ENCODE measurements at regions of chr12 and their contacts with region 1.

Region 1: GRCh38 chr12:2004113-2004929 is at the start of gene DCP1B:
- DNase-seq: peak; percentile 76 to 93 (median 90)
- ATAC-seq: peak; percentile 99
- H3K4me3 ChIP-seq: peak within 1 kb of the TSS; percentile 80
- H3K4me3 Mint-ChIP-seq: peak within 1 kb of the TSS; percentile 92 to 100 (median 97)
- H3K27ac ChIP-seq: peak within 1 kb of the TSS; percentile 80
- H3K27ac Mint-ChIP-seq: peak within 1 kb of the TSS; percentile 93 to 99 (median 97)
- H3K4me1 ChIP-seq: peaks cover 10 to 18% of the 10 kb centered on the region in 2 donors
- H3K4me1 Mint-ChIP-seq: peaks cover 15 to 44% (median 36%) of the 10 kb centered on the region in 7 donors
- H3K27me3 ChIP-seq: no peaks in the 10 kb centered on the region
- H3K27me3 Mint-ChIP-seq: peaks cover 0 to 6% (median 0%) of the 10 kb centered on the region in 5 donors
- total RNA-seq, gene DCP1B: 8.1 to 19.7 (median 15.5) TPM

Region 2: GRCh38 chr12:188910-189621 is 1815.3 kb before region 1 on chr12:
- CTCF ChIA-PET with region 1: no interaction called
- POLR2A ChIA-PET with region 1: no interaction called
- intact Hi-C with region 1: no loop called
- DNase-seq: peak in 7 of 9 donors; percentile 17 to 60 (median 31)
- ATAC-seq: peak; percentile 89
- H3K4me3 ChIP-seq: peak overlapping the region; percentile 40
- H3K4me3 Mint-ChIP-seq: peak overlapping the region; percentile 73 to 89 (median 84)
- H3K27ac ChIP-seq: no peak overlapping the region
- H3K27ac Mint-ChIP-seq: peak overlapping the region in 1 of 9 donors; percentile 21
- H3K4me1 ChIP-seq: no peaks in the 10 kb centered on the region
- H3K4me1 Mint-ChIP-seq: peaks cover 0 to 9% (median 4%) of the 10 kb centered on the region in 7 donors
- H3K27me3 ChIP-seq: peaks cover 0 to 4% of the 10 kb centered on the region in 2 donors
- H3K27me3 Mint-ChIP-seq: peaks cover 5 to 31% (median 24%) of the 10 kb centered on the region in 5 donors

Region 3: DNA sequence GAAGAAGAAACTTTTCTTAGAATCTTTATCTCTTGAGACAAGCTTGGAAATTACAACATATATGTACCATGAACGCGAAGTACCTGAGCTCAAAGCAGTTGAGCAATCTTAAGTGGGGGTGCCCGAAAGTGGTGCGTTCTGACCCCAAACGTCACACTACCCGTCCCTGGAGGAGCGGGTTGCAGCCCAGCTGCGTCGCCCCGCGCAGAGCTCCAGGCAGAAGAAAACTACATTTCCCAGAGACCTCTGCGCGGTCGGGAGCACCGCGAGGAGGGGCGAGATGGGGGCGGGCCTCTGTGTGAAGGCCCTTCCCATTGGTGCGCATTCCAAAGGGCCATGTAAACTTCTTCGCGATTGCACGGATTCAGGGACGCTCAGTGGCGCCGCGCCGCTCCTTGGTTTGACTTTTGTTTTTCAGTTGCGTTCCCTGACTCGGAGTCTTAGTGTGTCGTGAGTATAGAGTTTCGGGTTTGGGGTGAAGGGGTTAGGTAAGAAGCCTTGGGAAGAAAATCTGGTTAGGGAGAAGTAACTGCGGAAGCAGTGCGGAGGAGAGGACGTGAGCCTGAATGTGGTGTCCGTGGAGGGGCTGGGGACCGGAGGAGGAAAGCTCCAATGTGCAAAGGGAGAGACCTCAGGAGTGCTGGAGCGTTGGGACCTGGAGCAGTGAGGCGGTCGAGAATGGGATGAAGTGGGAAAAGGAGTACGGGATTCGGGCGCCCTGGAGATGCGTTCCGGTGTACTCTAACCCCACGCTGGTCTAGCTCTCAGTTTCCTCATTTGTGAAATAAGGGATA is 1602.9 kb before region 1 on chr12 and contains the start of gene CCDC77:
- CTCF ChIA-PET with region 1: no interaction called
- POLR2A ChIA-PET with region 1: no interaction called
- intact Hi-C with region 1: loop called (anchors 2 to 10 kb)
- DNase-seq: peak; percentile 91 to 97 (median 95)
- ATAC-seq: peak; percentile 100
- H3K4me3 ChIP-seq: peak within 1 kb of the TSS; percentile 94
- H3K4me3 Mint-ChIP-seq: no peak within 1 kb of the TSS
- H3K27ac ChIP-seq: peak within 1 kb of the TSS; percentile 71
- H3K27ac Mint-ChIP-seq: peak within 1 kb of the TSS in 1 of 9 donors; percentile 62
- H3K4me1 ChIP-seq: peaks cover 4 to 13% of the 10 kb centered on the region in 2 donors
- H3K4me1 Mint-ChIP-seq: peaks cover 0 to 9% (median 5%) of the 10 kb centered on the region in 7 donors
- H3K27me3 ChIP-seq: no peaks in the 10 kb centered on the region
- H3K27me3 Mint-ChIP-seq: no peaks in the 10 kb centered on the region
- total RNA-seq, gene CCDC77: 9.7 to 15.6 (median 12.7) TPM

Region 4: DNA sequence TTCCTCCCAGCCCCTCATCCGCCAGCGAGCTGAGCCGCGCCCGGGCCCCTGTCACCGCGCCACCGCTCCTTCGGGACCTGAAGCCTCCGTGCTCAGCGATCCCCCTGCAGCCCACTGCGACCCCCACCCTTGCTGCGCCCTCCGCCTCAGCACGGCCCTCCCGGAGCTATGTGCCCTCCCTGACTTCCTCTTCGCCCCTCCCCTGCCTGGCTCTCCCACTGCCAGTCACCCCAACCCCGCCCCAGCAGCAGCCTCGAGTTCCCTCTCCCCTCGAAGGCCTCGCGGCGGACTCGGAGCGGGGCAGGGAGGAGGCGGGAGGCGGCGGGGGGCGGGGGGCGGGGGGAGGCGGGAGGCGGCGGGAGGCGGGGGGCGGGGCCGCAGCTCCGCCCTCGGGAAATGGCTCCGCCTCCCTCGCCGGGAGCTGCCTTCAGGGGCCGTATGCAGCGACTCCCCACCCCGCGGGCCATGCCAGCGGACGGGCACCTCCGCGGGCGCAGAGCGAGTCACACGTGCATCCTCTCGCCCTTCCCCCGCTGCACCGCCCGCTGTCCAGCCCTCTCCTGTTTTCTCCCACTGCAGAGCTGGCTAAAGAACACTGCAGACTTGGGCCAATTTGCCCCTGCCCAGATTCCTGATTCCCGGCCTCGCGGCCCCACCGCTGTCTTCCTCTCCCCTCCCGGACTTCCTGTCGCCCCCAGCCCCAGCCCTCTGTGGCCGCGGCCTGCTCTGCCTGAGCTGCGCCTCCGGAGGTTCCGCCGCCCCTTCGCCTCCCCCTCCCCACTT is 342.6 kb before region 1 on chr12:
- CTCF ChIA-PET with region 1: no interaction called
- POLR2A ChIA-PET with region 1: no interaction called
- intact Hi-C with region 1: loop called (anchors 1 to 2 kb)
- DNase-seq: peak; percentile 74 to 84 (median 82)
- ATAC-seq: peak; percentile 93
- H3K4me3 ChIP-seq: peak overlapping the region; percentile 64
- H3K4me3 Mint-ChIP-seq: peak overlapping the region; percentile 70 to 86 (median 78)
- H3K27ac ChIP-seq: peak overlapping the region; percentile 66
- H3K27ac Mint-ChIP-seq: peak overlapping the region in 8 of 9 donors; percentile 62 to 87 (median 82)
- H3K4me1 ChIP-seq: peaks cover 5 to 7% of the 10 kb centered on the region in 2 donors
- H3K4me1 Mint-ChIP-seq: peaks cover 14 to 37% (median 31%) of the 10 kb centered on the region in 7 donors
- H3K27me3 ChIP-seq: no peaks in the 10 kb centered on the region
- H3K27me3 Mint-ChIP-seq: peaks cover 0 to 2% (median 0%) of the 10 kb centered on the region in 5 donors

Region 5: GRCh38 chr12:1804545-1805332 is 199.6 kb before region 1 on chr12:
- CTCF ChIA-PET with region 1: no interaction called
- POLR2A ChIA-PET with region 1: no interaction called
- intact Hi-C with region 1: loop called (anchors 1 to 2 kb)
- DNase-seq: peak; percentile 58 to 86 (median 79)
- ATAC-seq: peak; percentile 98
- H3K4me3 ChIP-seq: peak overlapping the region; percentile 26
- H3K4me3 Mint-ChIP-seq: peak overlapping the region in 5 of 10 donors; percentile 21 to 44 (median 29)
- H3K27ac ChIP-seq: peak overlapping the region; percentile 63
- H3K27ac Mint-ChIP-seq: peak overlapping the region in 8 of 9 donors; percentile 55 to 90 (median 76)
- H3K4me1 ChIP-seq: peaks cover 6 to 7% of the 10 kb centered on the region in 2 donors
- H3K4me1 Mint-ChIP-seq: peaks cover 5 to 12% (median 6%) of the 10 kb centered on the region in 7 donors
- H3K27me3 ChIP-seq: no peaks in the 10 kb centered on the region
- H3K27me3 Mint-ChIP-seq: no peaks in the 10 kb centered on the region

Region 6: GRCh38 chr12:2034633-2035430 is 30.5 kb after region 1 on chr12:
- CTCF ChIA-PET with region 1: interaction called, 4 read pairs
- POLR2A ChIA-PET with region 1: no interaction called
- intact Hi-C with region 1: loop called (anchors 1 kb)
- DNase-seq: peak; percentile 70 to 94 (median 83)
- ATAC-seq: peak; percentile 100
- H3K4me3 ChIP-seq: peak overlapping the region; percentile 64
- H3K4me3 Mint-ChIP-seq: peak overlapping the region; percentile 67 to 81 (median 74)
- H3K27ac ChIP-seq: no peak overlapping the region
- H3K27ac Mint-ChIP-seq: peak overlapping the region in 4 of 9 donors; percentile 6 to 85 (median 47)
- H3K4me1 ChIP-seq: peaks cover 0 to 4% of the 10 kb centered on the region in 2 donors
- H3K4me1 Mint-ChIP-seq: peaks cover 6 to 15% (median 13%) of the 10 kb centered on the region in 7 donors
- H3K27me3 ChIP-seq: peaks cover 0 to 4% of the 10 kb centered on the region in 2 donors
- H3K27me3 Mint-ChIP-seq: peaks cover 33 to 75% (median 36%) of the 10 kb centered on the region in 5 donors

Region 7: DNA sequence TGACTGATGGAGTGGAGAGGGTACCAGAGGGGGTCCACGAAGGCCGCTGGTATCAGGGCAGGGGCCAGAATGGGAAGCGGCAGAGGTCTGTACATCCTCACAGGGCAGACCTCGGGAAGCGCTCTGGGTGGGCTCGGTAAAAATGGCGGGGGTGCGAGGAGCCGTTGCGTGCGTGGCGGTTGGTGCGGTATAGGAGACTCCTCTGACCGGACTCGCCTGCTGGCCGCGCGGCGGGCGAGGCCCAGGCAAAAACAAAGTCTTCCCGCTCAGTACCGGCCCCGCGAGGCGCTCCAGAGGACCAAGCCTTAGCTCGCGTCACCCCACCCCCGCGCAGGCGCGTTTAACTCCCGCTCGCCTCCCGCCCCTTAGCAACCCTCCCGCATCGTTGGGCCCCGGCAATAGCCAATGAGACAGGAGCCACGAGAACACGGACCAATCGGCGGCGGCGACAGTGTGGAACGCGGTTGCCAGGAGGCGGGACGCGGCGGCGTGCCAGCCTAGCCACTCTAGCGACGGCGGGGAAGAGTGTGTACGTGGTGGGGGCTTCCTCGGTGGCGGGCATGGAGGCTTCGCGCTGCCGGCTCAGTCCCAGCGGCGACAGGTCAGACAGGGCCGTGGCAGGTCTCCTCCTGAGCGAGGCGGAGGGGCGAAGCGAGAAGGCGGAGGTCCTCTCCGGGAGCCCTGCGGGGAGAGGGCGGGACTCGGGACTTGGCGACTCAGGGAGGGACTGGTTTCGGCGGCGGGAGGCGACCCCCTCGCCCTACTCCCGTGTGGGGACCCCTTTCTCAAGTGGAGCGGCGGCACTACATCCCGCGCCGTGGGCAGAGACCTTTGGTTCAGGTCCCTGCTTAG is 886.3 kb after region 1 on chr12 and contains the start of gene TULP3:
- CTCF ChIA-PET with region 1: no interaction called
- POLR2A ChIA-PET with region 1: no interaction called
- intact Hi-C with region 1: loop called in 1 of 2 experiments (anchors 1 kb)
- DNase-seq: peak; percentile 95 to 98 (median 97)
- ATAC-seq: peak; percentile 99
- H3K4me3 ChIP-seq: peak within 1 kb of the TSS; percentile 96
- H3K4me3 Mint-ChIP-seq: peak within 1 kb of the TSS; percentile 93 to 100 (median 98)
- H3K27ac ChIP-seq: peak within 1 kb of the TSS; percentile 89
- H3K27ac Mint-ChIP-seq: peak within 1 kb of the TSS; percentile 81 to 97 (median 97)
- H3K4me1 ChIP-seq: peaks cover 3 to 8% of the 10 kb centered on the region in 2 donors
- H3K4me1 Mint-ChIP-seq: peaks cover 15 to 35% (median 31%) of the 10 kb centered on the region in 7 donors
- H3K27me3 ChIP-seq: no peaks in the 10 kb centered on the region
- H3K27me3 Mint-ChIP-seq: peaks cover 0 to 2% (median 0%) of the 10 kb centered on the region in 5 donors
- total RNA-seq, gene TULP3: 4.7 to 9.6 (median 7.4) TPM

Measured in naive thymus-derived CD4-positive, alpha-beta T cell (primary cell).